Activated CD8-positive, alpha-beta T cell treated with anti-CD3 and anti-CD28 coated beads for 36 hours (primary cell): ENCODE measurements at regions of chr1 and their contacts with region 1.

Region 1: GRCh38 chr1:228794173-228794572 is 58.9 kb downstream of the RHOU start:
- DNase-seq: peak; percentile 72
- ATAC-seq: peak; percentile 78
- H3K4me3 Mint-ChIP-seq: no peak overlapping the region
- H3K27ac Mint-ChIP-seq: no peak overlapping the region
- H3K4me1 Mint-ChIP-seq: peaks cover 14% of the 10 kb centered on the region
- H3K27me3 Mint-ChIP-seq: no peaks in the 10 kb centered on the region
- CTCF ChIP-seq: no peak

Region 2: GRCh38 chr1:228734881-228735801 is 59.0 kb before region 1 on chr1 and contains the start of gene RHOU:
- CTCF ChIA-PET with region 1: interaction called, 15 read pairs
- POLR2A ChIA-PET with region 1: interaction called, 3 read pairs
- intact Hi-C with region 1: no loop called
- DNase-seq: peak; percentile 63
- ATAC-seq: peak; percentile 89
- H3K4me3 Mint-ChIP-seq: peak within 1 kb of the TSS; percentile 68
- H3K27ac Mint-ChIP-seq: no peak within 1 kb of the TSS
- H3K4me1 Mint-ChIP-seq: peaks cover 5% of the 10 kb centered on the region
- H3K27me3 Mint-ChIP-seq: peaks cover 10% of the 10 kb centered on the region
- CTCF ChIP-seq: peak; percentile 87
- total RNA-seq, gene RHOU: 1.2 TPM

Region 3: DNA sequence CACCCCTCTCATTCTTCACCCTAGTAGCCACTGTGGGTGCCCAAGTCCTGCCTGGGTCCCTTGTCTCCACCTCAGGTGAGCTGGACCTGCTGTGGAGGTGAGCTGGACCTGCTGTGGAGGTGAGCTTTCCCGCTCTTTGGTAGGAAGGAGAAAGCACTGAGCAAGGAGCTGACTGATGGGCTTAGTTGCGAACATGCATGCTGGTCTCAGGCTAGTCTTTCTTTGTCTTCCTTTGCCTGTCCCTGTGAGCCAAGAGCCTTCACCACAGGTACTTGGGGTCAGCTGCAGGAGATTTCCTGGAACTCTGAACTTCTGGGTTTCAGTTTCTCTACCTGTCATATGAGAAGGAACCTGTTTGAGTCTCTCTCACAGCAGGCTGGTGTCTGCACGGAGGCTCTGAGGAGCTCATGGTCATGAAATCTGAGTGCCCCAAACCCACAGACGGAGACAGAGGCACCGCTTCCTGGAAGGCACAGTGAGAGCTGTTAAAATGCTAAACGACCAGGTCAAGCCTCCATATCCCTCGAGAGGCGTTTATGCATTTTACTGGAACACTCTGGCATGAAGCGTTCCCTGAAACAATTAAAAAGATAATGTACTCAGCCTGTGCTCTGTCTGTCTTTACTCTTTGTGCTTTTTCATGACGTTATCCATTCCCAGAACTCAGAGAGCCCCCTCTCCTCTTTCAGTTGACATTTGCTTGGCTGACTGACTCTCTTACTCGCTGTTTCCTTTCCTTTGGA is 10.7 kb after region 1 on chr1:
- CTCF ChIA-PET with region 1: interaction called, 17 read pairs
- POLR2A ChIA-PET with region 1: interaction called, 17 read pairs
- intact Hi-C with region 1: no loop called
- DNase-seq: peak; percentile 82
- ATAC-seq: peak; percentile 91
- H3K4me3 Mint-ChIP-seq: peak overlapping the region; percentile 58
- H3K27ac Mint-ChIP-seq: peak overlapping the region; percentile 94
- H3K4me1 Mint-ChIP-seq: peaks cover 39% of the 10 kb centered on the region
- H3K27me3 Mint-ChIP-seq: no peaks in the 10 kb centered on the region
- CTCF ChIP-seq: no peak